Pancreas (tissue), 10 donors: ENCODE measurements at regions of chr2 and their contacts with region 1.

Region 1: DNA sequence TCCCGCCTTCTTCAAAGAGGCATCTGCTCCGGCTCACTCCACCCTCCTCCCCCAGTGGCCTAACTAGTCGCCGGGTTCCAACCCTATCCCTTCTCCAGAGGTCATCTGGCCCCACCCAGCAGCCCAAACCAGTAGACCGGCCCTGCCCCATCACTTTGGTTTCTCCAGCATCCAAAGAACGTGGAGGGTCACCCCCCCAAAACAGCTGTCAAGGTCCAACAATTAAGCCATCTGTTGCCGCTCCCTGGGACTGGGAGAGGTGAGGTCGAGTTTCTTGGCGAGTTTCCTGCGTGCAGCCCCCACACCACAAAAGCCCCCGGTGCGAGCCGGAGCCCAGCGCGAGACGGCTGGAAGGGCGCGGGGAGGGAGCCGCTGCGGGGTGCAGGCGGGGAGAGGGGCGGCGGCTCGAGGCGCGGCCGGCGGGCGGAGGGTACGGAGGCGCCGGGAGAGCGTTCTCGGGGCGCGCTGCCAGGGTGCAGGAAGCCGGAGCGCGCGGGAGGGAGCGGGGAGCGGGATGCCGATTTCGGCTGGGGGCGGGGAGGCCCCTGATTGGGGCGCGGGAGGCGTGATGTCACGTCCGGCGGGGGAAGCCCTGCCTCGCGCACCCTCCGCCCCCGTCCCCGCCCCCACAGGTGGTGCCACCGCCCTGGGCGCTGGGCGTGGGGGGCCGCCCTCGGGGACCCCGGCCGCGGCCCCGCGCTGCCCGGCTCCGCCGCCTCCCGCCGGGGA is 571 bp upstream of the GPC1 start:
- DNase-seq: peak; percentile 94 to 97 (median 95)
- ATAC-seq: peak; percentile 80 to 88 (median 85)
- H3K4me3 ChIP-seq: peak overlapping the region; percentile 23 to 84 (median 66)
- H3K27ac ChIP-seq: peak overlapping the region; percentile 23 to 79 (median 72)
- H3K4me1 ChIP-seq: peaks cover 0 to 11% (median 10%) of the 10 kb centered on the region in 3 donors
- H3K27me3 ChIP-seq: no peaks in the 10 kb centered on the region
- CTCF ChIP-seq: no peak

Region 2: DNA sequence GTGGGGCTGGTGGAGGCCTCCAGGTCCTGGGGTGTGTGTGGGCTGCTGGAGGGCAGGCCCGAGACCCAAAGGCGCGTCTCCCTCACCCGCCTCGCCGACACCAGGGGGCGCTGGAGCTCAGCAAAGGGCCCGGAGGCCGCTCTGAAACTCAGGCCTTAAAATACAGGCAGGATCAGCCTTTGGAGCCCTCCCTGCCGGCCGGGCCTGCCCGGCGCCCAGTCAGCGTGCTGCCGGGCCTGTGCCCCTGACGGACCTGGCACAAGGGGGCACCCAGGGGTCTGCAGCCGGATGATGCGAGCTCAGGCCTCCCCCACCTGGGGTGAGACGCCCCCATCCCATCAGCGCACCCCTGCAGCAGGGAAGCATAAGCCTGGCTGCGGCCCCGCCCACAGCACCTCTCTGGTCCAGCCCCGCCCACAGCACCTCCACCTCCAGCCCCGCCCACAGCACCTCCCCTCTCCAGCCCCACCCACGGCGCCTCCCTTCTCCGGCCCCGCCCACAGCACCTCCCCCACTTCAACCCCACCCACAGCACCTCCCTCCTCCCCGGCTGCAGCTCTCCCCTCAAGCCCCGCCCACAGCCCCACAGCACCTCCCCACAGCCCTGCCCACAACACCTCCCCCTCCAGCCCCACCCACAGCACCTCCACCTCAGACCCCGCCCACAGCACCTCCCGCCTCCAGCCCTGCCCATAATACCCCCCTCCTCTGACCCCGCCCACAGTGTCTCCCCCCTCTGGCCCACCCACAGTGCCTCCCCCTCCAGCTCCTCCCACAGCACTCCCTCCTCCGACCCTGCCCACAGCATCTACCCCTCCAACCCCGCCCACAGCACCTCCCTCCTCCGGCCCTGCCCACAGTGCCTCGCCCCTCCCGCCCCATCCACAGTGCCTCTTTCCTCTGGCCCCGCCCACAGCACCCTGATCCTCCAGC is 201.7 kb before region 1 on chr2:
- intact Hi-C with region 1: loop called (anchors 2 to 10 kb)
- DNase-seq: peak; percentile 89 to 99 (median 96)
- ATAC-seq: peak; percentile 70 to 86 (median 78)
- H3K4me3 ChIP-seq: peak overlapping the region in 2 of 4 donors; percentile 27 to 40
- H3K27ac ChIP-seq: peak overlapping the region; percentile 38 to 66 (median 56)
- H3K4me1 ChIP-seq: peaks cover 14 to 24% (median 16%) of the 10 kb centered on the region in 3 donors
- H3K27me3 ChIP-seq: no peaks in the 10 kb centered on the region
- CTCF ChIP-seq: peak; percentile 85 to 91 (median 88)

Region 3: DNA sequence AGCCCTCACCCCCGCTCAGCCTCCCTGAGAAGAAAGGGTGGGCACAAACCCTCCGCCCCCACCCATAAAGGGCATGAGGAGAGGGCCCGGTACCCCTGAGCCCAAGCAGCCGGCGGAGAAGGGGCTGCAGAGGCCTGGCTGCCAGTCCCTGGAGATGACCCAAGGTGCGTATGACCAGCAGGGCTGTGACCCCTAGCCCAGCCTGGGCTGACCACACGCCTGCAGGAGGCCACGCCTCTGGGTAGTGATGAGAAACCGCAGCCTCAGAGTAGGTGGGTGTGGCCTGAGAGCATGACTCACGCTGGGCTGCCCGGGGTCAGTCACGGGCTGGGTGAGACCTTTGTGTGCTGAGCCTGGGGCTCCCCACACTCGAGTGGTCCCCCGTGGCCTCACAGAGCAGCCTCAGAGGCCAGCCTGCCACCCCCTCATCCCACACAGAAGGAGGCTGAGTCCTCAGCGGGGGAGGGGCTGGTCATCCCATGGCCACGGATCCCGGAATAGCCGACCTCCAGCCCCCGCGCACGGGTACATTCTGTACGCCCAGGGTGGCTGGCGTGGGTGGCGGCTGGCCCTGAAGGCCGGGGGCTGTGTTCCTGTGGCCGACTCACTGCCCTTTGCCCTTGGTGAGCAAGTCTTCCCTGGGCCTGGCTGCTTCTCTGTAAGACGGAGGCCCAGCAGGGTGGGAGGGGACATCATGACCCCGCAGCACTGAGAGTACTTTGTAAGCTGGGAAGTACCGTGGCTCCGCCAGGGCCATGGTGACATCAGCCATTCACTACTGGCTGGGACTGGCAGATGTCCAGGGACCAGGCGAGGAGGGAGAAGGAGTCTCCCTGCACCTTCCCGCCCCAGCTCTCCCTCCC is 183.7 kb before region 1 on chr2:
- intact Hi-C with region 1: no loop called
- DNase-seq: peak; percentile 87 to 96 (median 92)
- ATAC-seq: peak; percentile 84 to 93 (median 88)
- H3K4me3 ChIP-seq: peak overlapping the region in 2 of 4 donors; percentile 11 to 16
- H3K27ac ChIP-seq: peak overlapping the region; percentile 86 to 95 (median 87)
- H3K4me1 ChIP-seq: peaks cover 11 to 19% (median 16%) of the 10 kb centered on the region in 3 donors
- H3K27me3 ChIP-seq: no peaks in the 10 kb centered on the region
- CTCF ChIP-seq: no peak

Region 4: DNA sequence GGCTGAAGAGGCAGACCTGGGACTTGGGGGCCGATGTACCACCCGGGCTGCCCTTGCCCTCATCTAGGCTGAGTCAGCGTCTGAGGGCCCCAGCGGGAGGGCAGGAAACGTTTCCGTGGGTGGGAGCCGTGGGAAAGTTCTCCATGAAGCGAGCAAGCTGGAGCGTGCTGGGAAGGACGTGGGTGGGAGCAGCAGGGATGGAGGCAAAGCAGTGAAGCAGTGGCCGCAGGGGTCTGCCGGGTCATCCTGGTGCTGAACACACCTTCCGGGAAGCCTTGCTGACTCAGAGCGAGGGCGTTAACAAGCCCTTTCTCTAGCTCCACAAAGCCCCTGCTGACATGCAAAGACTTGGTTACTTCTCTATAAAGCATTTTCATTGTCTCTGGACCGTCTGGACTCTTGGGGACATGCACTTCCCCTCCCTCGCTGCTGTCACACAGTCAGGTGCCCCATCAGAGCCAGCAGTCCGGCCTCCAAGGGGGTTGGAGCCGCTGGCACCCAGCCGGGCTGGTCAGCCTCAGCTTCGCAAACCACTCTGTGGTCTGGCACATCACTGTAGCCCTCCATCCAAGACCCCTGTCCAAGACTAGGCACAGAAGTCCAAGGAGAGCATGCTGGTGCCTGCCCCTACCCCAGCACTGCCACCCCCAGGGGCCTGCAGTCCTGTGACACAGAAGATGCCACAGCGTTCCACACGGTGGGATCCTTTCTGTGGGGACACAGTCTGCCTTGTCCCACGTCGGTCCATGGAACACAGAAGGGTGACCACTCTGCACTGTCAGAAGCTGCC is 114.5 kb before region 1 on chr2:
- intact Hi-C with region 1: no loop called
- DNase-seq: no peak
- ATAC-seq: peak in 2 of 4 donors; percentile 27 to 61
- H3K4me3 ChIP-seq: no peak overlapping the region
- H3K27ac ChIP-seq: no peak overlapping the region
- H3K4me1 ChIP-seq: no peaks in the 10 kb centered on the region
- H3K27me3 ChIP-seq: no peaks in the 10 kb centered on the region
- CTCF ChIP-seq: no peak